ENCODE measurements at regions of chr1 and their contacts with region 1.

Region 1: DNA sequence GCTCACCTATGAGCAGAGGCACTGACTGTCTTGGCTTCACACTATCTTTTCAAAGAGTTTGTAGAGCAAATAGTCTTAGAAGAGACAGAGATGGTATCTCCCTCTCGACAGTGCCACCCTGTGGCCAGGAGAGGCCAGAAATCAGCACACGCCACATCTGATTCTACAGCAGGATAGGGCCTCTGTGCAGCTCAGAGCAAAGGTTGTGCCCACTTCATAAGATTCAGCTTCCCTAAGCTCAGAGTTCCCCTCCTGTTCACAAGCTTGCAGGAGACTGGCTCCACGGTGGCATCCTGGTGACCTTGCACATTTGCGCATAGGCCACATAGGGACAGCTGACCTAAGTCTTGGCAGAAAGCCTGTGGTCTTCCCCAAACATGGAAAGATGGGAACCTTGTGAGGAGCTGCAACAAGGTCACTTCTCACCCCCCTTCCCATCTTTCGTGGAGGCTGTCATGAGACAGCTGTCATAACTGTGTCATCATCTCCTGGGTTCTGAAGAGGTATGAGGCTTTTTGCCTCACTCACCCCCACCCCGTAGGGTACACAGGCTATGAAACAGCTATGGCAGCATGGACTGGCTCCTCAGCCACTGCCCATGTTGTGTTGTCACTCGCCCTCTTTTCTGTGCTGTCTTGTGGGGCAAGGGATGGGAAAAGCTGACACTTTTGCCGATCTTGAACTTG is 3.0 kb downstream of the ITLN2 start:
- DNase-seq: peak; percentile 46 to 60 (median 57)
- H3K4me3 ChIP-seq: no peak overlapping the region
- H3K4me3 Mint-ChIP-seq: no peak overlapping the region
- H3K27ac ChIP-seq: no peak overlapping the region
- H3K27ac Mint-ChIP-seq: no peak overlapping the region
- H3K4me1 ChIP-seq: no peaks in the 10 kb centered on the region
- H3K4me1 Mint-ChIP-seq: peaks cover 8% of the 10 kb centered on the region
- H3K27me3 ChIP-seq: no peaks in the 10 kb centered on the region
- H3K27me3 Mint-ChIP-seq: peaks cover 0 to 5% (median 2%) of the 10 kb centered on the region in 3 donors
- CTCF ChIP-seq: peak; percentile 90

Region 2: DNA sequence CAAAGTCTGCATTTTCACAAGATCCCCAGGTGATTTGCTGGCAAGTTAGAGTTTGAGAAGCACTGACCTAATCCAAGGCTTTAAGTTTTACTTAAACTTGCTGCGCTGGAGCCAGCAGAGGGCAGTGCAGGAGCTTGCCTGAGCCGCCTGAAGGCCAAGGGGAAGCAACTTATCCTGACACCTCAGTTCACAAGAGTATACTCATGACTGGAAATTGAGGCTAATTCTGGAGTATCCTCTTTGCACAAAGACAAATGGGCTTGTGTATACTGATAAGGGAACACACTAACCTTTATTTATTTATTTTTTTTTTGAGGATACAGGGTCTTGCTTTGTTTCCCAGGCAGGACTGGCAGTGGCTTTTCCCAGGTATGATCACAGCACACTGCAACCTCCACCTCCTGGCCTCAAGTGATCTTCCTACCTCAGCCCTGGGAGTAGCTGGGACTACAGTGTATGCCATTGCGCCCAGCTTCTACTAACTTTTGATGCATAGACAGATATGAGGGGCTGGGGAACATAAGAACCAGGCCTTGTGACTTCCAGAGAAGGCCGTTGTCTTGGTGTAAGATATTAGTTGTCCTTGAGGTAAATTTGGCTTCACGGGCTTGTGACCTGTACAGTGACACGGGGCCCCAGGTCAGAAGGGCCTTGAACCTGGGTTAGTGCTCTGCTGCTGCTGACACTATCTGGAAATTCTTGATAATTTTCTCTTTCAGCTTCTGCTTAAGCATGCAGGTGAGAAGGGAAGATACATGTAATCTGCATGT is 275.8 kb before region 1 on chr1:
- intact Hi-C with region 1: loop called (anchors 5 kb)
- DNase-seq: peak; percentile 63 to 79 (median 64)
- H3K4me3 ChIP-seq: no peak overlapping the region
- H3K4me3 Mint-ChIP-seq: no peak overlapping the region
- H3K27ac ChIP-seq: peak overlapping the region in 1 of 2 donors; percentile 38
- H3K27ac Mint-ChIP-seq: peak overlapping the region; percentile 22 to 73 (median 63)
- H3K4me1 ChIP-seq: peaks cover 22 to 34% of the 10 kb centered on the region in 2 donors
- H3K4me1 Mint-ChIP-seq: peaks cover 6% of the 10 kb centered on the region
- H3K27me3 ChIP-seq: no peaks in the 10 kb centered on the region
- H3K27me3 Mint-ChIP-seq: no peaks in the 10 kb centered on the region
- CTCF ChIP-seq: peak; percentile 90

Region 3: DNA sequence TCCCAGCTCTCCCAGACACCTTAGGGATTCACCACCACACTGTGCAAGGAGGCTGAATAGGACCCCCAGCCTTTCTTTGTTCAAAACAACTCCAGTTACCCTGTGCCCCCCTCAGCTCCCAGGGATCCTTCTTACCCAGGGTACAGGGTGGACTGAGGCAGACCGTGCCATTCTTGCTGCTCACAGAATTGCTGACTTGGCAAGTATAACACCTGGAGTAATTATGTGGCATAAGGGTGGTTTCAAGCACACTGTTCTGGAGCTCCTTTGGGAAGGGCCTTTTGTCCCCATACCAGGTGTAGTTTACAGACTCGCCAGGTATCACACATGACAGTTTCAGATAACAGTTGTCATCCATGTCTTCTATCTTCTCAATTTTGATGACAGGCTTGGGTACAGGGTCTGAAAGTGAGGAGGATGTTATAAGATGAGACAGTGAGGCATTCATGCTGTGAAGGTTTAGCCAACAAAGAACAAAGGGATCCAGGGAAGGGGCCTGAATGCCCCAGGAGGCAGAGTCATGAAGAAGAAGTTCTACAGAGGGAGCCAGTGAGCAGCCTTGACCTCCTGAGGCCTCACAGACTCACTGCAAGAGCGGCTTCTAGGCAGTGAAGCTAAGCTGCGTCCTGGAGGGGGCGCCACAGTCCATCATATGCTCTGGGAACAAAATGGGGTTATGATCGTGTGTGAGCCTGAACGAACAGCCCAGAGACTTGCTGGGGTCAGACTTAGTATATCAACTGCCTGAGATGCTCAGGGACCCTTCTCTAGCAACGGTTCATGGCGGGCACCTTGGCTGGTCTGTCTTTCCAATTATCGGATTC is 270.3 kb before region 1 on chr1:
- intact Hi-C with region 1: loop called (anchors 5 kb)
- DNase-seq: peak; percentile 76 to 90 (median 80)
- H3K4me3 ChIP-seq: no peak overlapping the region
- H3K4me3 Mint-ChIP-seq: no peak overlapping the region
- H3K27ac ChIP-seq: peak overlapping the region in 1 of 2 donors; percentile 33
- H3K27ac Mint-ChIP-seq: peak overlapping the region; percentile 43 to 91 (median 63)
- H3K4me1 ChIP-seq: peaks cover 47 to 49% of the 10 kb centered on the region in 2 donors
- H3K4me1 Mint-ChIP-seq: peaks cover 51% of the 10 kb centered on the region
- H3K27me3 ChIP-seq: no peaks in the 10 kb centered on the region
- H3K27me3 Mint-ChIP-seq: no peaks in the 10 kb centered on the region
- CTCF ChIP-seq: peak; percentile 94

Region 4: GRCh38 chr1:160726498-160727315 is 224.9 kb before region 1 on chr1:
- intact Hi-C with region 1: loop called (anchors 2 to 5 kb)
- DNase-seq: peak; percentile 71 to 84 (median 83)
- H3K4me3 ChIP-seq: peak overlapping the region in 2 of 3 experiments; percentile 0 to 60
- H3K4me3 Mint-ChIP-seq: no peak overlapping the region
- H3K27ac ChIP-seq: peak overlapping the region in 1 of 2 donors; percentile 65
- H3K27ac Mint-ChIP-seq: no peak overlapping the region
- H3K4me1 ChIP-seq: peaks cover 44 to 53% of the 10 kb centered on the region in 2 donors
- H3K4me1 Mint-ChIP-seq: peaks cover 24% of the 10 kb centered on the region
- H3K27me3 ChIP-seq: no peaks in the 10 kb centered on the region
- H3K27me3 Mint-ChIP-seq: no peaks in the 10 kb centered on the region
- CTCF ChIP-seq: peak; percentile 97

Region 5: DNA sequence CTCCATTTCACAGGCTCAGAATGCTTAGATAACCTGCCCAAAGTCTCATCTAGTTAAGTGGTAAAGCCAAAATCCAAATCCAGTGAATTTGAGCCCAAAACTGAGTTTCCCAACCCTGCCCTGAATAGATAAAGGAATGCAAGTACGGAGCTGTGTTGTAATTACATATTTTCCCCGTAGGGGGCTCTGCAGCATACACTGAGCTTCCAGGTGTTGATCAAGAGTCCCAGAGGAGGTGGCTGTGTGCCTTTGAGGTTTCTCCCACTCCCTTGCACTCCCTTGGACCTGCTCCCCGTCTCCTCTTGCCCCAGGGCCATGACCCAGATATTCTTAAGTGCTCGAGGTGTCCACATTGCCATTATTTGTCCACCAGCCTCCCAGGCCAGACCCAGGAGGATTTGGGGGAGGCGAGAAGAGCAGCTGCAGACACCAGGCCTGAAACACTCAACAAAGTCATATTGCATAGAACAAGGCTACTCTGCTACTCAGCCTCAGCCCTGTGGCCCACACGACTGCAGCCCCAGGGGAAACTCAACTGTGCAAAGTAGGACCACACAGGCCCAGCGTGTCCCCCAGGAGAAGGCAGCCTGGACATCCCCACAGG is 174.0 kb before region 1 on chr1:
- intact Hi-C with region 1: loop called in 1 of 2 experiments (anchors 5 kb)
- DNase-seq: peak in 2 of 3 donors; percentile 47 to 49
- H3K4me3 ChIP-seq: no peak overlapping the region
- H3K4me3 Mint-ChIP-seq: no peak overlapping the region
- H3K27ac ChIP-seq: no peak overlapping the region
- H3K27ac Mint-ChIP-seq: no peak overlapping the region
- H3K4me1 ChIP-seq: peaks cover 20 to 24% of the 10 kb centered on the region in 2 donors
- H3K4me1 Mint-ChIP-seq: peaks cover 26% of the 10 kb centered on the region
- H3K27me3 ChIP-seq: no peaks in the 10 kb centered on the region
- H3K27me3 Mint-ChIP-seq: peaks cover 0 to 2% (median 0%) of the 10 kb centered on the region in 3 donors
- CTCF ChIP-seq: peak; percentile 75

Region 6: DNA sequence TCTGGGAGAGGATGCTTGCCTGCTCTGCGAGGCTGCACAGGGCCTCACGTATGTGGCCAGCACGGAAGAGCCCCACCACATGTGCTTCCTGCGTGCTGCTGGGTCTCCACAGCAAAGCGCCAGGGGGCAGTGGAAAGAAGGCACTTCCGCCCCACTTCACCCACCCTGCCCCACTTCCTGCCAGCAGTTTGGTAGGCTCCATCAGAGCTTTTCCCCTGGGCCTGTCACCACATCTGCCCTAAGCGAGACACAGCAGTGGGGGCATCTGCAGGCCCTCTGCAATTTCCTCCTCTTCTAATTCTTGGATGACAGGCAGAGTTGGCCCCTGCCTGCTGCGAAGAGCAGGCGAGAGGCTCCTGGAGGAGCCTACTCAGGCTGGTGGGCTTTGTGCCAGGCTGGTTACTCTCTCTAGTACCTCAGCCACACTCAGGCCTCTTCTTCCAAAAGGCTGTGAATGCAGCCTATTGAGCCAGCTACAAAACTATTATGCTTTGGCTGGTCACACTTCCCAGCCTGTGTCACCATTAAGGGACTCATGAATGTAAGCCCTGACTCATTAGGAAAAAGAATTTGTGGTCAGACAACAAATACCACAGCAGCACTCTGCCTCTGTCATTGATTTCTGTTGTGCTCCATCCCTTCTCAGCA is 113.9 kb before region 1 on chr1:
- intact Hi-C with region 1: loop called (anchors 2 to 5 kb)
- DNase-seq: peak; percentile 27 to 51 (median 30)
- H3K4me3 ChIP-seq: no peak overlapping the region
- H3K4me3 Mint-ChIP-seq: no peak overlapping the region
- H3K27ac ChIP-seq: peak overlapping the region in 1 of 2 donors; percentile 54
- H3K27ac Mint-ChIP-seq: peak overlapping the region in 4 of 7 donors; percentile 18 to 84 (median 68)
- H3K4me1 ChIP-seq: peaks cover 31 to 38% of the 10 kb centered on the region in 2 donors
- H3K4me1 Mint-ChIP-seq: peaks cover 39% of the 10 kb centered on the region
- H3K27me3 ChIP-seq: no peaks in the 10 kb centered on the region
- H3K27me3 Mint-ChIP-seq: peaks cover 0 to 4% (median 0%) of the 10 kb centered on the region in 3 donors
- CTCF ChIP-seq: peak; percentile 27

Region 7: DNA sequence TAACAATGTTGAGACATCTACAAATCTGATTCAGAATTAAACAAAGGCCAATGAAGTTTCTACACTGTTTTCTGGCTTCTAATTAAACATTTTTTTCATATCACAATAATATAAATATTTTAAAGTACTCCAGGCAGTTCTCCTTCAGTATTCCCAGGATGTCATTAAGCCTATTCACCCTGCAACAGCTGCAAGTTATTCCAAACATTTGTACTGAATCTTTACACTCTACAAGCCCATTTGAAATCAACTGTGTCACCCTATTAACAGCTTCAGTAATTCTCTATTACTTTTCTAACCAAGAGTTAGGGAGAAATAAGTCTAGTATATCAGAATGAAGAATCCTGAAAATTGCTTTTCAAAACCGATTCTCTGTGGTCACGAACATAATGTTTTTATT is 947.5 kb after region 1 on chr1:
- intact Hi-C with region 1: no loop called
- DNase-seq: no peak
- H3K4me3 ChIP-seq: no peak overlapping the region
- H3K4me3 Mint-ChIP-seq: no peak overlapping the region
- H3K27ac ChIP-seq: no peak overlapping the region
- H3K27ac Mint-ChIP-seq: no peak overlapping the region
- H3K4me1 ChIP-seq: no peaks in the 10 kb centered on the region
- H3K4me1 Mint-ChIP-seq: no peaks in the 10 kb centered on the region
- H3K27me3 ChIP-seq: no peaks in the 10 kb centered on the region
- H3K27me3 Mint-ChIP-seq: no peaks in the 10 kb centered on the region
- CTCF ChIP-seq: no peak

Measured in CD14-positive monocyte (primary cell).